ENCODE measurements at regions of chr3 and their contacts with region 1.

Region 1: DNA sequence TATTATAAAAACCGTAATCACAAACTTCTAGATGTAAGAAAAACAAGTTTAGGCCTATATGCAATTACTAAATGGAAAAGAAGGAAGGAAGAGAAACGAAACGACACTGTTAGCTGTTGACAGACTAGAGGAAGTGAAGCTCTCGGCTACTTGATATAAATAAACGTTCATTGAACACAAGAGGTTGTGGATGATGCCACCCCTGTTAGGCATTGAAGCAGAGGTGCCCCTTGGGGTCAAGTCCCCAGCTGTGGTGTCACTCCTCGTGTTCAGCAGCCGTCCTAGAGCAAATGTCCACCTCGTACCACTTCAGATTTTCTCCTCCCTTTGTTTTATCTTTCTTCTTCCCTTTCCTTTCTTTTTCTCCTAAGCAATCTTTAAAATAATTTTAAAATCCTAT is 146.5 kb upstream of the UBE2E1 start:
- DNase-seq: peak; percentile 60
- ATAC-seq: peak; percentile 88
- H3K4me3 ChIP-seq: no peak overlapping the region
- H3K27ac ChIP-seq: peak overlapping the region; percentile 81
- H3K4me1 ChIP-seq: peaks cover 36% of the 10 kb centered on the region
- H3K27me3 ChIP-seq: no peaks in the 10 kb centered on the region
- CTCF ChIP-seq: no peak
- EP300 ChIP-seq: peak; percentile 36 to 56; a peak in 1 of 4 replicates
- POLR2A ChIP-seq: no peak
- RAD21 ChIP-seq: no peak

Region 2: DNA sequence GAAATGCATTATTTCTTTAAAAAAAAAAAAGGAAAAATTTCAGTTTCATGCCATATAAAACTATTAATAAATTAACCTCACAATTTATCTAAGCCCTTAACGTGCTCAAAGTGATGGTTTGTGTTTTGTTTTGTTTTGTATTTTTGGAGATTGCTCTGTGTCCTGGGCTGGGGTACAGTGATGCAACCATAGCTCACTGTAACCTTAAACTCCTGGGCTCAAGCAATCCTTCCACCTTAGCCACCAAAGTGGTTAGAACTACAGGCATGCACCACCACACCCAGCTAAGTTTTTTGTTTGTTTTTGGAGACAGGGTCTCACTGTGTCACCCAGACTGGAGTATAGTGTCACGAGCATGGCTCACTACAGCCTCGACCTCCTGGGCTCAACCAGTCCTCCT is 275.4 kb before region 1 on chr3:
- CTCF ChIA-PET with region 1: no interaction called
- POLR2A ChIA-PET with region 1: no interaction called
- RAD21 ChIA-PET with region 1: no interaction called
- SMC1A ChIA-PET with region 1: no interaction called
- in situ Hi-C with region 1: no loop called
- intact Hi-C with region 1: no loop called
- DNase-seq: no peak
- ATAC-seq: no peak
- H3K4me3 ChIP-seq: no peak overlapping the region
- H3K27ac ChIP-seq: no peak overlapping the region
- H3K4me1 ChIP-seq: no peaks in the 10 kb centered on the region
- H3K27me3 ChIP-seq: no peaks in the 10 kb centered on the region
- CTCF ChIP-seq: no peak
- EP300 ChIP-seq: no peak
- POLR2A ChIP-seq: no peak
- RAD21 ChIP-seq: no peak

Region 3: DNA sequence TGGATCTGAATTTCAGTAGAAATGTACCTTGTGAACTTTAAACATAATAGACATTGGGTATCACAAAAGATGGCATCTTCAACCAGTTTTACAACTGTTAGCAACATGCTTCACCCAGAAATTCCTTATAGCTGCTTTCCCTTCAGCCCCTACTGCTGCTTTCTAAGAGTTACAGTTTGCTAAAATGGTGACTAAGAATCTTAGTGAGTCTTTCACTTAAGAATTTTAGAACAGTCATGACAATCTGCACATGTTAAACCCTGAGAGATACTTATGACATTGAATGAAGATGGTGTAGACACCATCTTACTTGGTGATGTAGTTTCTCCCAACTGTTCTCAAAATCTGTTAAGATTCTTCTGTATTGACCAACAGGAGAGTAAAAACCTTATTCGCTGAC is 16.8 kb after region 1 on chr3:
- CTCF ChIA-PET with region 1: interaction called, 6 read pairs
- POLR2A ChIA-PET with region 1: interaction called, 3 read pairs
- RAD21 ChIA-PET with region 1: no interaction called
- SMC1A ChIA-PET with region 1: interaction called, 45 read pairs
- in situ Hi-C with region 1: no loop called
- intact Hi-C with region 1: no loop called
- DNase-seq: no peak
- ATAC-seq: no peak
- H3K4me3 ChIP-seq: no peak overlapping the region
- H3K27ac ChIP-seq: no peak overlapping the region
- H3K4me1 ChIP-seq: peaks cover 6% of the 10 kb centered on the region; the same call in 1 of the 2 replicates
- H3K27me3 ChIP-seq: no peaks in the 10 kb centered on the region
- CTCF ChIP-seq: no peak
- EP300 ChIP-seq: no peak
- POLR2A ChIP-seq: no peak
- RAD21 ChIP-seq: no peak